CD8-positive, alpha-beta memory T cell (primary cell): ENCODE measurements at regions of chr1 and their contacts with region 1.

Region 1: DNA sequence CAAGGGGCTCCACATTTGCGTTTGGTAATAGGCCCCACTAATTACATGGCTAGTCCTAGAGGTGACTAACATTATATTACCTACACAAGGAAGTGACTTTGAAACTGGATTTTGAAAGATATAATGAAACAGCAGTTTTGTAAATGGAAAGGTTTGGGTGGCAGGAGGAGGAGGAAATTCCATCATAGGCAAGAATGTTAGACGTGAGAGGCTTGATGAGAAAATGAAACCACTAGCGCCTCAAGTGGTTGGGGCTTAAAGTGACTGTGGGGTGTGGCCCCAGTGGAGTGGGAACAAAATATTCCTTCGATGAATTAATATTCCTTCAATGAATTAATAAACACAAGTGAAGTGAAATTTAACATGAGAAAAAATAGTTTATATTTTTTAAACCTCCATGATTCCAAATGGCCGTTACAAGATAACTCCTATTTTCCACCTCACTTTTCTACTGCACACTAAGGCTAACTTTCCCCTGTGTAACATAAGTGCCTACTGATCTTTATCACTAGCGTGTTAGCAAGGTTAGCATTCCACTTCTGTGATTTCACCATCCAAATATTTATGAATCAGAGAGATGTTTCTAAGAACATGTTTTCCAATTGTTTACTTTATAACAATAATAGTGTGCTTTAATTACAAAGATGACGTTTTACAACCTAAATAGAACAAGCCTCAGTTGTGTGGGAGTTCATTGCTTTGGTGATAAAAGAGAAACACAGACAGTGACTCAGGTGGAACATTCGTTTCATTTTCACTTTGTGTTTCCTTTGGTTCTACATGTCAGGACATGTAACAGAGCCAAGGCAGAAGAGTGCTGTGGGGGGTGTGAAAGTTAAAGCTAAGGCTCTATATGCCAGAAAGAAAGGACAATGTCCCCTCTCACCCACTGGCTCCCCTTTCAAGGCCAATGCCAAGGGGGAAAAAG is 12.5 kb upstream of the ATF3 start:
- DNase-seq: peak in 3 of 5 donors; percentile 24 to 62 (median 62)
- H3K4me3 ChIP-seq: peak overlapping the region; percentile 41
- H3K4me3 Mint-ChIP-seq: peak overlapping the region; percentile 43 to 78 (median 75)
- H3K27ac ChIP-seq: peak overlapping the region; percentile 34
- H3K27ac Mint-ChIP-seq: peak overlapping the region; percentile 27 to 93 (median 89)
- H3K4me1 ChIP-seq: peaks cover 15% of the 10 kb centered on the region
- H3K4me1 Mint-ChIP-seq: peaks cover 11 to 18% (median 17%) of the 10 kb centered on the region in 3 donors
- H3K27me3 ChIP-seq: no peaks in the 10 kb centered on the region
- H3K27me3 Mint-ChIP-seq: peaks cover 13 to 22% of the 10 kb centered on the region in 2 donors

Region 2: GRCh38 chr1:212583633-212584032 is 12.4 kb before region 1 on chr1:
- CTCF ChIA-PET with region 1: no interaction called
- POLR2A ChIA-PET with region 1: no interaction called
- DNase-seq: no peak
- H3K4me3 ChIP-seq: no peak overlapping the region
- H3K4me3 Mint-ChIP-seq: no peak overlapping the region
- H3K27ac ChIP-seq: no peak overlapping the region
- H3K27ac Mint-ChIP-seq: no peak overlapping the region
- H3K4me1 ChIP-seq: no peaks in the 10 kb centered on the region
- H3K4me1 Mint-ChIP-seq: no peaks in the 10 kb centered on the region
- H3K27me3 ChIP-seq: peaks cover 31% of the 10 kb centered on the region
- H3K27me3 Mint-ChIP-seq: peaks cover 15 to 77% of the 10 kb centered on the region in 2 donors

Region 3: GRCh38 chr1:212608209-212608955 is 12.3 kb after region 1 on chr1 and contains the start of gene ATF3:
- CTCF ChIA-PET with region 1: interaction called, 6 read pairs
- POLR2A ChIA-PET with region 1: interaction called, 16 read pairs
- DNase-seq: peak; percentile 50 to 92 (median 83)
- H3K4me3 ChIP-seq: peak within 1 kb of the TSS; percentile 62
- H3K4me3 Mint-ChIP-seq: peak within 1 kb of the TSS; percentile 91 to 100 (median 96)
- H3K27ac ChIP-seq: peak within 1 kb of the TSS; percentile 71
- H3K27ac Mint-ChIP-seq: peak within 1 kb of the TSS; percentile 70 to 98 (median 92)
- H3K4me1 ChIP-seq: peaks cover 26% of the 10 kb centered on the region
- H3K4me1 Mint-ChIP-seq: peaks cover 18 to 32% (median 28%) of the 10 kb centered on the region in 3 donors
- H3K27me3 ChIP-seq: peaks cover 40% of the 10 kb centered on the region
- H3K27me3 Mint-ChIP-seq: peaks cover 44 to 63% of the 10 kb centered on the region in 2 donors
- total RNA-seq, gene ATF3: 58.8 to 59.0 TPM

Region 4: GRCh38 chr1:212838145-212838544 is 242.1 kb after region 1 on chr1:
- CTCF ChIA-PET with region 1: no interaction called
- POLR2A ChIA-PET with region 1: no interaction called
- DNase-seq: no peak
- H3K4me3 ChIP-seq: no peak overlapping the region
- H3K4me3 Mint-ChIP-seq: no peak overlapping the region
- H3K27ac ChIP-seq: no peak overlapping the region
- H3K27ac Mint-ChIP-seq: no peak overlapping the region
- H3K4me1 ChIP-seq: no peaks in the 10 kb centered on the region
- H3K4me1 Mint-ChIP-seq: peaks cover 8 to 11% (median 8%) of the 10 kb centered on the region in 3 donors
- H3K27me3 ChIP-seq: no peaks in the 10 kb centered on the region
- H3K27me3 Mint-ChIP-seq: peaks cover 0 to 2% of the 10 kb centered on the region in 2 donors